ENCODE measurements at regions of chr13 and their contacts with region 1.

Region 1: DNA sequence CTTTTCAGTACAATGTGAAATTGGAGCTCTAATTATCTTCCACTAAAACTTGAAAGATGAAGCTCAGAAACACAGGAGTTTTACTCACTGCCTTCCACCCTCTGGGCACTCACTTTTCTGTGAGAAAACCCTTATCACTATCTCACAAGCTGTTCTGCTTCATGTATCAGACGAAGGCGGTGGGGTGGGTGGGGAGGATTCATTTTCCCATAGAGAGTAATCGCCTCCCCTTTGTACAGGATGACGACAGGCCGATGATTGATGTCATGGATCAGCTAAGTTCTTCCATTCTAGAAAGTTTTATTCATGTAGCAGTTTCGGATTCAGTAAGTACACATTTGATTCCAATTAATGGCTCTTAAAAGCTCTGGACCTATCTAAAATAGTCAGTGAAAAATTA is 139.9 kb downstream of the ZAR1L start:
- DNase-seq: peak in 1 of 5 donors; percentile 30
- ATAC-seq: peak in 3 of 4 donors; percentile 27 to 47 (median 46)
- H3K4me3 ChIP-seq: no peak overlapping the region
- H3K27ac ChIP-seq: no peak overlapping the region
- H3K4me1 ChIP-seq: peaks cover 0 to 4% (median 0%) of the 10 kb centered on the region in 12 donors
- H3K27me3 ChIP-seq: no peaks in the 10 kb centered on the region
- CTCF ChIP-seq: no peak
- POLR2A ChIP-seq: no peak

Region 2: DNA sequence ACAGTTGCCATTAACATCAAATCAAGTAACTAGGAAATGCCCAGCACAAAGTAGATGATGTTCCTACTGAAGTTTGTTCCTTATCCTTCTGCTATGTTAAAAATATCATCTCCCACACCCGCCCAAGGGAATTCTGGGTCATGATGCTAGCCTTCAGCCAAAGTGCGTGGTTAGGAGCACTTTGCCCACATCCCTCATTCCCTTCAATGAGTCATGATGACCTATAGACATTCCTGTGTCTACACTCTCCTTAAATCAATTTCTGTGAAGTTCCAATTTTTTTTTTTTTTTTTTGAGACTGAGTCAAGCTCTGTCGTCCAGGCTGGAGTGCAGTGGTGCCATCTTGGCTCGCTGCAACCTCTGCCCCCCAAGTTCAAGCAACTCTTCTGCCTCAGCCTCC is 419.0 kb before region 1 on chr13:
- intact Hi-C with region 1: no loop called
- DNase-seq: no peak
- ATAC-seq: no peak
- H3K4me3 ChIP-seq: no peak overlapping the region
- H3K27ac ChIP-seq: no peak overlapping the region
- H3K4me1 ChIP-seq: no peaks in the 10 kb centered on the region
- H3K27me3 ChIP-seq: peaks cover 0 to 13% (median 0%) of the 10 kb centered on the region in 9 donors
- CTCF ChIP-seq: no peak
- POLR2A ChIP-seq: no peak

Region 3: GRCh38 chr13:32228330-32229041 is 53.2 kb after region 1 on chr13:
- intact Hi-C with region 1: loop called in 1 of 10 experiments (anchors 5 kb)
- DNase-seq: no peak
- ATAC-seq: peak in 1 of 4 donors; percentile 27
- H3K4me3 ChIP-seq: no peak overlapping the region
- H3K27ac ChIP-seq: no peak overlapping the region
- H3K4me1 ChIP-seq: peaks cover 0 to 19% (median 4%) of the 10 kb centered on the region in 12 donors
- H3K27me3 ChIP-seq: no peaks in the 10 kb centered on the region
- CTCF ChIP-seq: no peak
- POLR2A ChIP-seq: no peak

Region 4: DNA sequence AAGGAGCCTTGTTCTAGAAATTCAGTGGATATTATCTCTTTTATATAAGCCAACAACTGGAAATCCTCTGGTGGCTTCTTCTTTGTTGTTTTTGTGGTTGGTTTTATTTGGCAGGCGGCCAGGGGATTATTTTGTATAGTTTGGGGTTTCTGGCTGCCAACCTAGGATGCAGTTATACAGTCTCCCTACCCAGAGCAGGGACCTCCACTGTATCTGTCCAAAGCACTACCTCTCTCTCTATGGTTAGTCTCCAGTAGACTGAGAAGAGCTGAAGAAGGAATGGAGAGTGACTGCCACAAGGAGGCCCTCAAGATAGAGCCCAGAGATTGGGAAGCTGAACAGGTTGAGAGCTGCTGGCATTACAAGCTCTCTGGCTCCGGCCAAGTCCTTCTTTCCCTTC is 59.6 kb after region 1 on chr13:
- intact Hi-C with region 1: loop called in 1 of 10 experiments (anchors 5 kb)
- DNase-seq: no peak
- ATAC-seq: peak in 3 of 4 donors; percentile 19 to 52 (median 29)
- H3K4me3 ChIP-seq: no peak overlapping the region
- H3K27ac ChIP-seq: no peak overlapping the region
- H3K4me1 ChIP-seq: peaks cover 0 to 16% (median 2%) of the 10 kb centered on the region in 12 donors
- H3K27me3 ChIP-seq: no peaks in the 10 kb centered on the region
- CTCF ChIP-seq: no peak
- POLR2A ChIP-seq: no peak

Region 5: DNA sequence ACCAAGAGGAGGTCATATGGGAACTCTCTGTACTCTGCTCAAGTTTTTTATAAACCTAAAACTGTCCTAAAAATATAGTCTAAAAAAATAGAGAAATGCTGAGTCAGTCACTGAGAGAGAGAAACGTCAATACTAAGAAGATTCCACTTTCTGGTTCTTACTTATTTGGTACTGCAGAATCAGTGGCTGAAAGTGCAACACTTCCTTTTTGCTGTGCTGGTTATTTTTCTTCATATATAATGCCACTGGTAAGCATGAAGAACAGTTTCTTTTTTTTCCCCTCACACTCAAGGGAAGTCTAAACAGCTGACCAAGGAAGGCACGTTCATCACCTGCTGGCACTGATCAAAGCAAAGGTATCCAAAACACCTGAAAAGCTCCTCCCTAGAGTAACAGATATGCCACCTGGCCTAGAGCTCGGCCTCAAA is 296.9 kb after region 1 on chr13:
- intact Hi-C with region 1: no loop called
- DNase-seq: no peak
- ATAC-seq: peak in 1 of 4 donors; percentile 40
- H3K4me3 ChIP-seq: no peak overlapping the region
- H3K27ac ChIP-seq: peak overlapping the region in 9 of 12 donors; percentile 2 to 73 (median 50)
- H3K4me1 ChIP-seq: peaks cover 0 to 30% (median 18%) of the 10 kb centered on the region in 12 donors
- H3K27me3 ChIP-seq: no peaks in the 10 kb centered on the region
- CTCF ChIP-seq: no peak
- POLR2A ChIP-seq: no peak

Measured in heart left ventricle (tissue), 16 donors.